Ovary (tissue), 10 donors: ENCODE measurements at regions of chr10 and their contacts with region 1.

Region 1: GRCh38 chr10:69123747-69124562 is at the start of gene VPS26A:
- DNase-seq: peak; percentile 99 to 100 (median 99)
- H3K4me3 ChIP-seq: peak within 1 kb of the TSS; percentile 91
- H3K27ac ChIP-seq: peak within 1 kb of the TSS; percentile 90 to 98
- H3K4me1 ChIP-seq: peaks cover 3% of the 10 kb centered on the region
- H3K27me3 ChIP-seq: no peaks in the 10 kb centered on the region
- CTCF ChIP-seq: peak in 1 of 3 donors; percentile 29
- EP300 ChIP-seq: no peak
- POLR2A ChIP-seq: peak; percentile 98
- total RNA-seq, gene VPS26A: 21.3 to 52.4 (median 44.1) TPM

Region 2: GRCh38 chr10:68895041-68895440 is 228.9 kb before region 1 on chr10:
- intact Hi-C with region 1: no loop called
- DNase-seq: no peak
- H3K4me3 ChIP-seq: no peak overlapping the region
- H3K27ac ChIP-seq: no peak overlapping the region
- H3K4me1 ChIP-seq: no peaks in the 10 kb centered on the region
- H3K27me3 ChIP-seq: no peaks in the 10 kb centered on the region
- CTCF ChIP-seq: no peak
- EP300 ChIP-seq: no peak
- POLR2A ChIP-seq: no peak

Region 3: GRCh38 chr10:69179743-69180524 is 56.0 kb after region 1 on chr10 and contains the start of gene SUPV3L1:
- intact Hi-C with region 1: loop called in 1 of 4 experiments (anchors 2 kb)
- DNase-seq: peak; percentile 91 to 93 (median 91)
- H3K4me3 ChIP-seq: peak within 1 kb of the TSS; percentile 71
- H3K27ac ChIP-seq: peak within 1 kb of the TSS; percentile 62 to 96
- H3K4me1 ChIP-seq: peaks cover 3% of the 10 kb centered on the region
- H3K27me3 ChIP-seq: no peaks in the 10 kb centered on the region
- CTCF ChIP-seq: peak in 2 of 3 donors; percentile 30 to 32
- EP300 ChIP-seq: no peak
- POLR2A ChIP-seq: peak; percentile 59
- total RNA-seq, gene SUPV3L1: 21.7 to 39.8 (median 28.4) TPM